ENCODE measurements at regions of chr9 and their contacts with region 1.

Region 1: GRCh38 chr9:78369639-78370219 is 72.8 kb downstream of the PSAT1 start:
- DNase-seq: peak; percentile 68 to 87 (median 72)
- H3K4me3 ChIP-seq: no peak overlapping the region
- H3K27ac ChIP-seq: no peak overlapping the region
- H3K4me1 ChIP-seq: no peaks in the 10 kb centered on the region
- H3K27me3 ChIP-seq: no peaks in the 10 kb centered on the region
- CTCF ChIP-seq: peak in 2 of 3 donors; percentile 50 to 55
- EP300 ChIP-seq: no peak
- POLR2A ChIP-seq: no peak

Region 2: GRCh38 chr9:78261403-78262001 is 108.2 kb before region 1 on chr9:
- intact Hi-C with region 1: loop called (anchors 5 to 10 kb)
- DNase-seq: no peak
- H3K4me3 ChIP-seq: no peak overlapping the region
- H3K27ac ChIP-seq: no peak overlapping the region
- H3K4me1 ChIP-seq: no peaks in the 10 kb centered on the region
- H3K27me3 ChIP-seq: no peaks in the 10 kb centered on the region
- CTCF ChIP-seq: peak; percentile 25 to 54 (median 33)
- EP300 ChIP-seq: no peak
- POLR2A ChIP-seq: no peak

Region 3: GRCh38 chr9:78267889-78268288 is 101.8 kb before region 1 on chr9:
- intact Hi-C with region 1: loop called in 3 of 4 experiments (anchors 5 to 10 kb)
- DNase-seq: no peak
- H3K4me3 ChIP-seq: no peak overlapping the region
- H3K27ac ChIP-seq: no peak overlapping the region
- H3K4me1 ChIP-seq: no peaks in the 10 kb centered on the region
- H3K27me3 ChIP-seq: no peaks in the 10 kb centered on the region
- CTCF ChIP-seq: no peak
- EP300 ChIP-seq: no peak
- POLR2A ChIP-seq: no peak